ENCODE measurements at regions of chr6 and their contacts with region 1.

Region 1: GRCh38 chr6:116680975-116681808 is at the start of gene KPNA5:
- DNase-seq: peak; percentile 95
- ATAC-seq: peak; percentile 95
- H3K4me3 Mint-ChIP-seq: peak within 1 kb of the TSS; percentile 89
- H3K27ac Mint-ChIP-seq: peak within 1 kb of the TSS; percentile 98
- H3K4me1 Mint-ChIP-seq: peaks cover 20% of the 10 kb centered on the region
- H3K27me3 Mint-ChIP-seq: no peaks in the 10 kb centered on the region
- total RNA-seq, gene KPNA5: 7.3 to 8.6 TPM

Region 2: GRCh38 chr6:116633685-116634084 is 47.5 kb before region 1 on chr6:
- CTCF ChIA-PET with region 1: no interaction called
- DNase-seq: no peak
- ATAC-seq: no peak
- H3K4me3 Mint-ChIP-seq: no peak overlapping the region
- H3K27ac Mint-ChIP-seq: no peak overlapping the region
- H3K4me1 Mint-ChIP-seq: peaks cover 4% of the 10 kb centered on the region
- H3K27me3 Mint-ChIP-seq: no peaks in the 10 kb centered on the region

Region 3: GRCh38 chr6:116667623-116668022 is 13.6 kb before region 1 on chr6:
- CTCF ChIA-PET with region 1: interaction called, 10 read pairs
- DNase-seq: no peak
- ATAC-seq: no peak
- H3K4me3 Mint-ChIP-seq: peak overlapping the region; percentile 83
- H3K27ac Mint-ChIP-seq: peak overlapping the region; percentile 94
- H3K4me1 Mint-ChIP-seq: peaks cover 35% of the 10 kb centered on the region
- H3K27me3 Mint-ChIP-seq: no peaks in the 10 kb centered on the region